CD4-positive, alpha-beta T cell (primary cell): ENCODE measurements at regions of chr10 and their contacts with region 1.

Region 1: DNA sequence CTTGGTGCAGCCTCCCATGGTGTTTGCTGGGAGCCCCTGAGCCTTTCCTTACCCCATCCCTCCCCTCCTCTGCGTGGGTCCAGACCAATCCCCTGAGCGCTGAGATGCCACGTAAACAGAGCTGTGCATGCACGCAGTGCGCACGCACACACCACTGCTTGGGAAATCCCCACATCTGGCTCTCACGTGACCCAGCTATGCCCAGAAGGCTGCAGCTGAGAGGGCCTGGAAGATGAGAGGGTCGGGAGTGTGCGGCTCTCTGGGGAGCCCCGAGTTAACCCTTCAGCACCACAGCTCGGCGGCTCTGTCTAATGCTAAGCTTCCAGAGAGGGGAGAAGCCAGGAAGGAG is 177.2 kb downstream of the SH3PXD2A start:
- DNase-seq: peak; percentile 70 to 98 (median 83)
- ATAC-seq: peak; percentile 97
- H3K4me3 ChIP-seq: peak overlapping the region; percentile 62
- H3K4me3 Mint-ChIP-seq: peak overlapping the region; percentile 79
- H3K27ac ChIP-seq: peak overlapping the region; percentile 69 to 89
- H3K27ac Mint-ChIP-seq: peak overlapping the region; percentile 95
- H3K4me1 ChIP-seq: peaks cover 29% of the 10 kb centered on the region
- H3K4me1 Mint-ChIP-seq: peaks cover 16% of the 10 kb centered on the region
- H3K27me3 ChIP-seq: no peaks in the 10 kb centered on the region
- H3K27me3 Mint-ChIP-seq: no peaks in the 10 kb centered on the region
- CTCF ChIP-seq: no peak

Region 2: GRCh38 chr10:103659674-103660363 is 18.3 kb before region 1 on chr10:
- CTCF ChIA-PET with region 1: no interaction called
- POLR2A ChIA-PET with region 1: interaction called, 12 read pairs
- intact Hi-C with region 1: no loop called
- DNase-seq: peak in 13 of 14 experiments; percentile 20 to 81 (median 38)
- ATAC-seq: peak; percentile 73
- H3K4me3 ChIP-seq: peak overlapping the region; percentile 86
- H3K4me3 Mint-ChIP-seq: peak overlapping the region; percentile 92
- H3K27ac ChIP-seq: peak overlapping the region; percentile 45 to 51
- H3K27ac Mint-ChIP-seq: peak overlapping the region; percentile 88
- H3K4me1 ChIP-seq: peaks cover 45% of the 10 kb centered on the region
- H3K4me1 Mint-ChIP-seq: peaks cover 19% of the 10 kb centered on the region
- H3K27me3 ChIP-seq: no peaks in the 10 kb centered on the region
- H3K27me3 Mint-ChIP-seq: no peaks in the 10 kb centered on the region
- CTCF ChIP-seq: no peak

Region 3: DNA sequence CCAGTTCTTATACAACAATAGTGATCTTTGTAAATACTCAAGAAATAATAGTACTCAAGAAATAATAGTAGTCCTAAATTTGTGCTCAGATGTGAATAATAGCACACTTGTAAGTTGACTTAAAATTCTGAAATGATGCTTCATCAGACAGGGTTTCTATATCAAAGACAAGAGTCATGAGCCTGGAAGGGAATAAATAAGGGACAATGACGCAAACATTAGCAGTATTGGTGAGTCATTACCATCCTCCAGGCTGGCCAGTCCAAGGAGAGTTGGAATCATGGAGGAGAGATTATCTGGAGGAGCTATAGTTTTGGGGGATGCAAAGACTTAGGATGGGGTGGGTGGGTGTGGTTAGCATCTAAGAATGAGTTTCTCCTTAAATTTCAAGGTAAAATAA is 183.4 kb after region 1 on chr10:
- CTCF ChIA-PET with region 1: no interaction called
- POLR2A ChIA-PET with region 1: no interaction called
- intact Hi-C with region 1: no loop called
- DNase-seq: no peak
- ATAC-seq: no peak
- H3K4me3 ChIP-seq: no peak overlapping the region
- H3K4me3 Mint-ChIP-seq: no peak overlapping the region
- H3K27ac ChIP-seq: no peak overlapping the region
- H3K27ac Mint-ChIP-seq: no peak overlapping the region
- H3K4me1 ChIP-seq: peaks cover 4% of the 10 kb centered on the region
- H3K4me1 Mint-ChIP-seq: no peaks in the 10 kb centered on the region
- H3K27me3 ChIP-seq: peaks cover 2 to 3% of the 10 kb centered on the region in 2 experiments
- H3K27me3 Mint-ChIP-seq: peaks cover 19% of the 10 kb centered on the region
- CTCF ChIP-seq: no peak

Region 4: GRCh38 chr10:104054430-104054829 is 376.3 kb after region 1 on chr10:
- CTCF ChIA-PET with region 1: no interaction called
- POLR2A ChIA-PET with region 1: no interaction called
- intact Hi-C with region 1: no loop called
- DNase-seq: no peak
- ATAC-seq: no peak
- H3K4me3 ChIP-seq: no peak overlapping the region
- H3K4me3 Mint-ChIP-seq: no peak overlapping the region
- H3K27ac ChIP-seq: no peak overlapping the region
- H3K27ac Mint-ChIP-seq: no peak overlapping the region
- H3K4me1 ChIP-seq: no peaks in the 10 kb centered on the region
- H3K4me1 Mint-ChIP-seq: no peaks in the 10 kb centered on the region
- H3K27me3 ChIP-seq: no peaks in the 10 kb centered on the region
- H3K27me3 Mint-ChIP-seq: no peaks in the 10 kb centered on the region
- CTCF ChIP-seq: no peak